ENCODE measurements at regions of chr20 and their contacts with region 1.

Region 1: GRCh38 chr20:59403261-59403961 is 103.0 kb downstream of the EDN3 start:
- DNase-seq: peak; percentile 32 to 57
- ATAC-seq: peak; percentile 78

Region 2: GRCh38 chr20:58870239-58871014 is 533.0 kb before region 1 on chr20:
- intact Hi-C with region 1: loop called in 1 of 2 experiments (anchors 10 kb)
- DNase-seq: peak; percentile 56 to 79
- ATAC-seq: peak; percentile 90

Region 3: DNA sequence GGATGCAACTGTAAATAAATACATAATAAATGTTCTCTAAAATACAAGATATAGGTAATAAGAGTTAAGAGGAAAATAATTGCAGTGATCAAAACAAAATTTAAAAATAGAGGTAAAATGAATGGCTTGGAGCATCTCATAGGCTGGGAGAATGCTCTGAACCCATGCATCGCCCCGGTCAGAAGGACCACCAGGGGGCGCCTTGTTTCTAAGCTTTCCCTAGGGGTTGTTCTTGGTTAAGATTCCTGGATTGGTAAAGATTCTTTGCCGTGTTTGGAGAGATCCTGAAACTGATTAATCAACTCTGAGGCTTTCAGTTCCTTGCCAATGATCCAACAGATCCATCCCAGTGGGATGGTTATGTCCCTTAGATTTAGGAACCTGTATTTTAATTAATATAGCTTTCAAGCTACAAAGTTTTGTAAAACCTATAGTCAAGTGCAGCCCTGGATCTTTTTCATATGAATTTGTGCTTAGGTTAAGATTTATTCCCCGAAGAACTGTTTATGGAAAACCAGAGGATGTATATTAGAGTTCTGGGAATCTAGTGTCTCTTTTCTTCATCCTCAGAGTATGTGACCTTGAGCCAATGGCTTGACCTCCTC is 315.5 kb before region 1 on chr20:
- intact Hi-C with region 1: loop called in 1 of 2 experiments (anchors 10 kb)
- DNase-seq: peak; percentile 60 to 93
- ATAC-seq: peak; percentile 94

Region 4: DNA sequence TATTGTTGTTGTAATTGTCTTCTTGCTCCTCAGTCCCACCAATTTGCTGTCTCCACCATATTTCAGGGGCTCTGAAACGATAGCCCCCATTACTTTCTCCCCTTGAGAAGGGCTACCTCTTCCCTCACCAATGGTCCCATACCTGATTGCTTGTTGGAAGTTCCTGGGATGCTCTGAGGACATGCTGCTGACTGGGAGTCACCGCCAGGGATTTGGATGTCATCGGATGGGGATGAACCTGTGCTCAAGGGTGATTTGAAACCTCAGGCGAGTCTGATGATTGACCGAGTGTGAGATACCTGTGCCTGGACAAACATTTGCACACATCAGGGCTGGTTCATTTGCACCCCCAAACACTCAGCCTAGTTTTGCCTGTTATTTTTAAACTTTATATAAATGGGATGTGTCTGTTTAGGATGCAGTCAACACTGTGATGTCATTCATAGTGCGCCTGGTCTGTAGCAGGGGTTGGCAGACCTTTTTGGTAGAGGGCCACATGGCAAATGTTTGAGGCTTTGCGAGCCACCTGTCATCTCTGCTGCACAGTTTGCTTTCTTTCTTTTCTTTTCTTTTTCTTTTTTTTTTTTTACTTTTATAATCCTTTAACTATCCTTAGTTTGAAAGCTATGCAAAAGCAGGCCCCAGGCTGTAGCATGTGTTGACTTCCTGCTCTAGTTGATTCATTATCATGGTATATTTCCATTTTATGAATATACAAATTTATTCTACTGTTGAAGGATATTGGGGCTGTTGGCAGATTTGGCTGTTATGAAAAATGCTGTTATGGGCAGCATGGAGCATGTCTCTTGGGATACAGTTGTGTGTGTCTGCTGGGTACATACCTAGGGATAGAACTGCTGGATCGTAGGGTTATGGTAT is 82.4 kb after region 1 on chr20:
- intact Hi-C with region 1: no loop called
- DNase-seq: no peak
- ATAC-seq: no peak

Measured in left colon (tissue), 2 donors.